ENCODE measurements at regions of chr5 and their contacts with region 1.

Region 1: GRCh38 chr5:90878549-90879196 is 320.1 kb downstream of the ADGRV1 start:
- DNase-seq: peak; percentile 90
- H3K4me3 ChIP-seq: no peak overlapping the region
- H3K27ac ChIP-seq: peak overlapping the region; percentile 55
- H3K4me1 ChIP-seq: peaks cover 16% of the 10 kb centered on the region
- H3K27me3 ChIP-seq: no peaks in the 10 kb centered on the region
- CTCF ChIP-seq: no peak
- POLR2A ChIP-seq: no peak

Region 2: DNA sequence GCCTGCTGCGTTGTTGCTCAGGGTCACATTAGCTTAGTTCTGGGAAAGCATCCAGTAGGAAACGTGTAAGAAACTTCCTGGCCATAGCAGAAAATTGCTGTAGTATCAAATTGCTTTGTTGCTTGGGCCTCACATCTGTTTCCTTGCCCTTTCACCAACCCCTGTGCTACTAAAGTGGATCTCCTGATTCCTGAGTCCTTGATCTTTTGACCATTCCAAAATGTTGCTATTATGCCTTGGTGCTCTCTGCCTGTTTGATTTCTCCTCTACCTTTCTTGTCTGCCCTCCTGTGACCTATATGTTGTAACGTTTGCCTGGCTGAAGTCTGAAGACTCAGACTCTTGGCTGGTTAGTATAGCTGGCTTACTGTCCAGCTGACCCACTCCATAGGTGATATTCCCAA is 30.4 kb after region 1 on chr5:
- CTCF ChIA-PET with region 1: interaction called, 5 read pairs
- POLR2A ChIA-PET with region 1: no interaction called
- dilution Hi-C with region 1: no loop called
- intact Hi-C with region 1: loop called (anchors 1 kb)
- DNase-seq: peak; percentile 93
- H3K4me3 ChIP-seq: no peak overlapping the region
- H3K27ac ChIP-seq: peak overlapping the region; percentile 48
- H3K4me1 ChIP-seq: peaks cover 12% of the 10 kb centered on the region
- H3K27me3 ChIP-seq: no peaks in the 10 kb centered on the region
- CTCF ChIP-seq: no peak
- POLR2A ChIP-seq: no peak